GM12878 (cell line): ENCODE measurements at regions of chr5 and their contacts with region 1.

Region 1: GRCh38 chr5:89556215-89557009 is 673.4 kb upstream of the MEF2C start:
- DNase-seq: no peak
- ATAC-seq: no peak
- H3K4me3 ChIP-seq: no peak overlapping the region
- H3K27ac ChIP-seq: no peak overlapping the region
- H3K4me1 ChIP-seq: no peaks in the 10 kb centered on the region
- H3K27me3 ChIP-seq: no peaks in the 10 kb centered on the region
- CTCF ChIP-seq: no peak
- EP300 ChIP-seq: no peak
- POLR2A ChIP-seq: no peak
- RAD21 ChIP-seq: no peak

Region 2: GRCh38 chr5:89277816-89278215 is 278.6 kb before region 1 on chr5:
- CTCF ChIA-PET with region 1: no interaction called
- POLR2A ChIA-PET with region 1: no interaction called
- RAD21 ChIA-PET with region 1: no interaction called
- SMC1A ChIA-PET with region 1: no interaction called
- in situ Hi-C with region 1: no loop called
- intact Hi-C with region 1: no loop called
- DNase-seq: no peak
- ATAC-seq: peak; percentile 15; the same call in 1 of the 3 replicates
- H3K4me3 ChIP-seq: no peak overlapping the region
- H3K27ac ChIP-seq: peak overlapping the region; percentile 40
- H3K4me1 ChIP-seq: peaks cover 40% of the 10 kb centered on the region
- H3K27me3 ChIP-seq: no peaks in the 10 kb centered on the region
- CTCF ChIP-seq: no peak
- EP300 ChIP-seq: no peak
- POLR2A ChIP-seq: no peak
- RAD21 ChIP-seq: no peak

Region 3: DNA sequence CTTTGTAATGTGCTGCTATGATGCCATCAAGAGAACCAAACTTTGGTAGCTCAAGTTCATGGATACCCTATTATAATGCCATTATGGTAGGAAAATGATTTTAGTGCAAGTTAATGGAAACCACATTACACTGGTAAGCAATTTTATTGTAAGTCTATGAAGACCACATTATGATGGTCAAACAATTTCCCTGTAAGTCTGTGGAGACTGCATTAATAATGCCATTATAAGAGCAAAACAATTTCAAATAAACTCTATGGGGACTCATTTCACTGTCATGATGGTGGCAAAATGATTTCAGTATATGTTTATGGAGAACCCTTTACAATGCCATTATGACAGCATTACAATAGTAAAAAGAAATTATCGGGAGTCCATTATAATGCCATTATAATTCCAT is 71.5 kb before region 1 on chr5:
- CTCF ChIA-PET with region 1: no interaction called
- POLR2A ChIA-PET with region 1: no interaction called
- RAD21 ChIA-PET with region 1: no interaction called
- SMC1A ChIA-PET with region 1: no interaction called
- in situ Hi-C with region 1: no loop called
- intact Hi-C with region 1: no loop called
- DNase-seq: no peak
- ATAC-seq: no peak
- H3K4me3 ChIP-seq: no peak overlapping the region
- H3K27ac ChIP-seq: no peak overlapping the region
- H3K4me1 ChIP-seq: no peaks in the 10 kb centered on the region
- H3K27me3 ChIP-seq: no peaks in the 10 kb centered on the region
- CTCF ChIP-seq: no peak
- EP300 ChIP-seq: no peak
- POLR2A ChIP-seq: no peak
- RAD21 ChIP-seq: no peak

Region 4: DNA sequence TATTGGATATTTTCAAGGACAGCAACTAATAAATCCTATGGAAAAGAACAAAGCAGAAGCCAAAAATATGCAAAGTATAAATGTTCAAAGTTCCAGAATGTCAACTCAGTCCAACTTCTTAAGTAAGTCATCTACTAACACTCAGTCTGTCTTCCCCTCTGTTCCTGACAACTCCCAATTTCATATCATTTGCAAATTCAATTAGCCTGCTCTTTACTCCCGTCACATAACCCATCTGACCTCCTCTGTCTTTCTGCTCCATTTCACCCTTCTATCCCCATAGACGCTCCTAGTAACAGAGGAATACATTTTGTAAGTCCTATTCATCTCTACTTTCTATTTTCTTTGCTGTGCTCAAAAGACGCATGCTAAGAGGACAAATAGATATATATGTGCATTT is 13.7 kb before region 1 on chr5:
- CTCF ChIA-PET with region 1: interaction called, 6 read pairs
- POLR2A ChIA-PET with region 1: no interaction called
- RAD21 ChIA-PET with region 1: no interaction called
- SMC1A ChIA-PET with region 1: interaction called, 10 read pairs
- in situ Hi-C with region 1: no loop called
- intact Hi-C with region 1: no loop called
- DNase-seq: no peak
- ATAC-seq: no peak
- H3K4me3 ChIP-seq: no peak overlapping the region
- H3K27ac ChIP-seq: no peak overlapping the region
- H3K4me1 ChIP-seq: no peaks in the 10 kb centered on the region
- H3K27me3 ChIP-seq: no peaks in the 10 kb centered on the region
- CTCF ChIP-seq: no peak
- EP300 ChIP-seq: no peak
- POLR2A ChIP-seq: no peak
- RAD21 ChIP-seq: no peak

Region 5: GRCh38 chr5:89570557-89570956 is 14.1 kb after region 1 on chr5:
- CTCF ChIA-PET with region 1: interaction called, 3 read pairs
- POLR2A ChIA-PET with region 1: interaction called, 3 read pairs
- RAD21 ChIA-PET with region 1: no interaction called
- SMC1A ChIA-PET with region 1: interaction called, 10 read pairs
- in situ Hi-C with region 1: no loop called
- intact Hi-C with region 1: no loop called
- DNase-seq: no peak
- ATAC-seq: no peak
- H3K4me3 ChIP-seq: no peak overlapping the region
- H3K27ac ChIP-seq: no peak overlapping the region
- H3K4me1 ChIP-seq: no peaks in the 10 kb centered on the region
- H3K27me3 ChIP-seq: no peaks in the 10 kb centered on the region
- CTCF ChIP-seq: no peak
- EP300 ChIP-seq: no peak
- POLR2A ChIP-seq: no peak
- RAD21 ChIP-seq: no peak